ENCODE measurements at regions of chr7 and their contacts with region 1.

Region 1: GRCh38 chr7:139995017-139995931 is 67.5 kb downstream of the PARP12 start:
- DNase-seq: peak; percentile 35 to 57
- ATAC-seq: peak; percentile 61 to 93 (median 84)
- H3K4me3 ChIP-seq: no peak overlapping the region
- H3K27ac ChIP-seq: no peak overlapping the region
- H3K4me1 ChIP-seq: peaks cover 0 to 9% (median 0%) of the 10 kb centered on the region in 9 donors
- H3K27me3 ChIP-seq: no peaks in the 10 kb centered on the region
- CTCF ChIP-seq: peak in 3 of 9 donors; percentile 16 to 26 (median 21)

Region 2: GRCh38 chr7:139494835-139495579 is 500.3 kb before region 1 on chr7:
- intact Hi-C with region 1: loop called in 6 of 10 experiments (anchors 5 to 10 kb)
- DNase-seq: no peak
- ATAC-seq: peak in 1 of 8 donors; percentile 49
- H3K4me3 ChIP-seq: no peak overlapping the region
- H3K27ac ChIP-seq: no peak overlapping the region
- H3K4me1 ChIP-seq: peaks cover 0 to 13% (median 4%) of the 10 kb centered on the region in 9 donors
- H3K27me3 ChIP-seq: peaks cover 0 to 11% (median 8%) of the 10 kb centered on the region in 7 donors
- CTCF ChIP-seq: no peak

Region 3: GRCh38 chr7:139783647-139784385 is 211.5 kb before region 1 on chr7:
- intact Hi-C with region 1: loop called in 9 of 10 experiments (anchors 5 to 10 kb)
- DNase-seq: no peak
- ATAC-seq: no peak
- H3K4me3 ChIP-seq: no peak overlapping the region
- H3K27ac ChIP-seq: no peak overlapping the region
- H3K4me1 ChIP-seq: peaks cover 0 to 10% (median 4%) of the 10 kb centered on the region in 9 donors
- H3K27me3 ChIP-seq: peaks cover 0 to 9% (median 0%) of the 10 kb centered on the region in 7 donors
- CTCF ChIP-seq: no peak

Region 4: DNA sequence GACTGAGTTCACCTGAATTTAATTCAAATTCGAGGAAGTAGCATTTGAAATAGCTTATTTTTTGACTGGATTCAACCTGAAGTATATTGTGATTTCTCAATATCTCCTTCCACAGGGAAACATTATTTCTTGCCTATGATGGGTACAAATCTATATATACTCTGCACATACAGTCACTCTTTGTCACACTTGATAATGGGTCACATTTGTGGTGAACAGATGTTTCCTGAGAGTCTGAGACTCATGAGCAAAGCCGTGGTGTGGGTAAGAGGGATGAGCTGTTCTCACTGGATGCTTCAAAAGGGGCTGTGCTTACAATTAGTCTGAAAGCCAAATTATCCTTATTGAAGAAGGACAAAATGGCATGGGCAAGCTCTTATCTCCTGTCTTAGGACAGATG is 184.2 kb before region 1 on chr7:
- intact Hi-C with region 1: loop called in 1 of 10 experiments (anchors 10 kb)
- DNase-seq: no peak
- ATAC-seq: no peak
- H3K4me3 ChIP-seq: no peak overlapping the region
- H3K27ac ChIP-seq: no peak overlapping the region
- H3K4me1 ChIP-seq: peaks cover 0 to 3% (median 0%) of the 10 kb centered on the region in 9 donors
- H3K27me3 ChIP-seq: no peaks in the 10 kb centered on the region
- CTCF ChIP-seq: no peak

Region 5: DNA sequence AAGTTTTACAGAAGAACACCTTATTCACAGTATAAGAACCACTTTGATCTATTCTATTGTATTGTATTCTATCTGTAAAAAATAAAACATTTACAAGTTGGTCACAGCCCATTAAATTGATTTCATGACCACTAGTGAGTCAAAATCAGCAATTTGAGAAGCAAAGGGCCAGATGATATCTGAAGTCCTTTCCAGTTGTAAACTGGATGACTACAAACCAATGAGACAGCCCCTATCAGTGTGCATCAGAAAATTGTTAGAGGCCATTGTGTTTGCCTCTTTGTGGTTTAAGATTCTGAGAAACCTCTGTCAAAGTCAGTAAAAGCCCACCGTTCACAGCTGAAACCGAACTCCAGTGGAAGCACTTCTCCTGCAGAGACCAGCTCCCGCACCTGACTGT is 111.5 kb before region 1 on chr7:
- intact Hi-C with region 1: loop called in 1 of 10 experiments (anchors 5 kb)
- DNase-seq: no peak
- ATAC-seq: no peak
- H3K4me3 ChIP-seq: no peak overlapping the region
- H3K27ac ChIP-seq: no peak overlapping the region
- H3K4me1 ChIP-seq: peaks cover 0 to 48% (median 0%) of the 10 kb centered on the region in 9 donors
- H3K27me3 ChIP-seq: no peaks in the 10 kb centered on the region
- CTCF ChIP-seq: no peak